ENCODE measurements at regions of chr1 and their contacts with region 1.

Region 1: GRCh38 chr1:181134543-181135362 is 46.3 kb downstream of the IER5 start:
- DNase-seq: peak; percentile 94
- H3K4me3 ChIP-seq: no peak overlapping the region
- H3K27ac ChIP-seq: peak overlapping the region; percentile 95
- H3K4me1 ChIP-seq: peaks cover 36% of the 10 kb centered on the region
- H3K27me3 ChIP-seq: no peaks in the 10 kb centered on the region
- CTCF ChIP-seq: no peak

Region 2: DNA sequence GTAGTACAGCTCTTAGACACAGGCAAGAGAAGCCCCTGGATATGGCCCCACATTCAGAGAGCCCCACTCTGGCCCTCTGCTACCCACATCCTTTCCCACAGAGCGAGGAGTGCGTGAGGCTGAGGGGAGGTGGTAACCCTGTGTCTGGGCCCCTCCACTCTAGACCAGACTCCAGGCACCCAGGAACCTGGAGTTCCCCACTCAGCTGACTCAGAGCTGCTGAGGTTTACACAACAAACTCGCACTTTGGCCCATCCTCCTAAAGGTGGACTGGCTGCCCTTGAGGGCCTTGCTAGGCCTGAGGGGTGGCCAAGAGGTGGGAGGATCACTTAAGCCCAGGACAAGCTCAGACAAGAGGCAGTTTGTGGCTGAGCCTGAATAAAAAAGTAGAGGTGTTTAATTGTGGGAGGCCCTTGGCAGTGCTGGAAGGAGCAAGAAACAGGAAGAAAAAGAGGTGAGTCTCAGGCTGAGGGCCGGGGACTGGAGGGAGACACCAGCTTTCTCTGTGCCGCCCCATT is 90.2 kb before region 1 on chr1:
- CTCF ChIA-PET with region 1: no interaction called
- dilution Hi-C with region 1: no loop called
- in situ Hi-C with region 1: no loop called
- intact Hi-C with region 1: no loop called
- DNase-seq: peak; percentile 97
- H3K4me3 ChIP-seq: peak overlapping the region in 1 of 3 experiments; percentile 7
- H3K27ac ChIP-seq: peak overlapping the region; percentile 65
- H3K4me1 ChIP-seq: peaks cover 30% of the 10 kb centered on the region
- H3K27me3 ChIP-seq: no peaks in the 10 kb centered on the region
- CTCF ChIP-seq: no peak

Region 3: GRCh38 chr1:181105134-181106021 is 29.4 kb before region 1 on chr1:
- CTCF ChIA-PET with region 1: interaction called, 15 read pairs
- dilution Hi-C with region 1: no loop called
- in situ Hi-C with region 1: no loop called
- intact Hi-C with region 1: no loop called
- DNase-seq: peak; percentile 85
- H3K4me3 ChIP-seq: peak overlapping the region; percentile 68 to 78 (median 69)
- H3K27ac ChIP-seq: peak overlapping the region; percentile 76
- H3K4me1 ChIP-seq: peaks cover 62% of the 10 kb centered on the region
- H3K27me3 ChIP-seq: no peaks in the 10 kb centered on the region
- CTCF ChIP-seq: no peak

Region 4: GRCh38 chr1:181112071-181112929 is 22.5 kb before region 1 on chr1:
- CTCF ChIA-PET with region 1: interaction called, 15 read pairs
- dilution Hi-C with region 1: no loop called
- in situ Hi-C with region 1: no loop called
- intact Hi-C with region 1: loop called (anchors 1 kb)
- DNase-seq: peak; percentile 100
- H3K4me3 ChIP-seq: no peak overlapping the region
- H3K27ac ChIP-seq: peak overlapping the region; percentile 79
- H3K4me1 ChIP-seq: peaks cover 51% of the 10 kb centered on the region
- H3K27me3 ChIP-seq: no peaks in the 10 kb centered on the region
- CTCF ChIP-seq: no peak

Region 5: GRCh38 chr1:181117638-181118449 is 16.9 kb before region 1 on chr1:
- CTCF ChIA-PET with region 1: no interaction called
- dilution Hi-C with region 1: no loop called
- in situ Hi-C with region 1: no loop called
- intact Hi-C with region 1: loop called (anchors 1 kb)
- DNase-seq: peak; percentile 96
- H3K4me3 ChIP-seq: no peak overlapping the region
- H3K27ac ChIP-seq: peak overlapping the region; percentile 62
- H3K4me1 ChIP-seq: peaks cover 62% of the 10 kb centered on the region
- H3K27me3 ChIP-seq: no peaks in the 10 kb centered on the region
- CTCF ChIP-seq: no peak

Region 6: GRCh38 chr1:181219938-181220337 is 85.2 kb after region 1 on chr1:
- CTCF ChIA-PET with region 1: no interaction called
- dilution Hi-C with region 1: no loop called
- in situ Hi-C with region 1: no loop called
- intact Hi-C with region 1: no loop called
- DNase-seq: peak; percentile 13
- H3K4me3 ChIP-seq: no peak overlapping the region
- H3K27ac ChIP-seq: no peak overlapping the region
- H3K4me1 ChIP-seq: no peaks in the 10 kb centered on the region
- H3K27me3 ChIP-seq: no peaks in the 10 kb centered on the region
- CTCF ChIP-seq: no peak

Measured in mammary epithelial cell (primary cell).